ENCODE measurements at regions of chr7 and their contacts with region 1.

Region 1: GRCh38 chr7:127708788-127709187 is 56.8 kb downstream of the SND1 start:
- DNase-seq: peak; percentile 80
- H3K4me3 Mint-ChIP-seq: no peak overlapping the region
- H3K27ac Mint-ChIP-seq: no peak overlapping the region
- H3K4me1 Mint-ChIP-seq: peaks cover 9% of the 10 kb centered on the region
- H3K27me3 Mint-ChIP-seq: no peaks in the 10 kb centered on the region
- CTCF ChIP-seq: peak; percentile 75

Region 2: GRCh38 chr7:127692200-127692599 is 16.6 kb before region 1 on chr7:
- CTCF ChIA-PET with region 1: interaction called, 29 read pairs
- POLR2A ChIA-PET with region 1: interaction called, 4 read pairs
- intact Hi-C with region 1: no loop called
- DNase-seq: no peak
- H3K4me3 Mint-ChIP-seq: no peak overlapping the region
- H3K27ac Mint-ChIP-seq: no peak overlapping the region
- H3K4me1 Mint-ChIP-seq: peaks cover 10% of the 10 kb centered on the region
- H3K27me3 Mint-ChIP-seq: no peaks in the 10 kb centered on the region
- CTCF ChIP-seq: no peak

Region 3: GRCh38 chr7:127726476-127726875 is 17.7 kb after region 1 on chr7:
- CTCF ChIA-PET with region 1: interaction called, 50 read pairs
- POLR2A ChIA-PET with region 1: interaction called, 4 read pairs
- intact Hi-C with region 1: no loop called
- DNase-seq: no peak
- H3K4me3 Mint-ChIP-seq: no peak overlapping the region
- H3K27ac Mint-ChIP-seq: no peak overlapping the region
- H3K4me1 Mint-ChIP-seq: peaks cover 3% of the 10 kb centered on the region
- H3K27me3 Mint-ChIP-seq: no peaks in the 10 kb centered on the region
- CTCF ChIP-seq: no peak

Measured in MCF 10A (cell line).